Activated CD4-positive, alpha-beta T cell treated with anti-CD3 and anti-CD28 coated beads, Interleukin-2, amount 10 ng/mL, durations not matched to agents 24 days and 14 days (primary cell): ENCODE measurements at regions of chr12 and their contacts with region 1.

Region 1: DNA sequence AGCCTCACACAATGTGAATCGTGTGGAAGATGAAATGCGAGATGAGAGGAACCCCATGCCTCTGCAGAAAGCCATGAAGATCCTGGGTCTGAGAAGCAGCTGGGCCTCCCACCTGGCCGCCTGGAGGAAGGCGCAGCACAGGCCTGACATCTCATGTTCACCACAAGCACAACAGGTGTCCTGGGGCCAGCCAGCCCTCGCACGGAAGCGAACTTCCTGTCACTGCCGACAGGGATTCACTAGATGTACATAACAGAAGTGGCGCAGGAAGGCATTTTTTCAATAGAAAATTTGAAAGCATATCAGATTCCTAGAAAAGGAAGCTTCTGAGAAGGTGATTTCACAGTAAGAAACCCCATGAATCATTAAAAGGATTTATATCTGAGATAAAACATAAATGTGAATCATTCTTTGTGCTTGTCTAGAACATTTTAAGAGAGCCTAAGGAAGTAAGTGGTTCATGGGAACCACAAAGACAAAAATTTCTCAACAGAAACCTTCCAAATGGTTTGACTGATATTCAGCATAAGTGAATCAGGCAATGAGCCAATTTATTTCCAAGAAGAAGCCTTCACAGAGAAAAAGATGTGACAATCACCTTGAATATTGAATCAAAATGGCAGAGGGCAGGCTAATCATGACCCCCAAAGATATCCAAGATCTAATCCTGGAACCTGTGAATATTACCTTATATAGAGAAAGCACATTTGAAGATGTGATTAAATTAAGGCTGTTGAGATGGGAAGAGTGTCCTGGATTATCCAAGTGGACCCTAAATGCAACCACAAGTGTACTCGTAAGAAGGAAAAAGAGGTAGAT is 311.9 kb downstream of the DUSP6 start:
- DNase-seq: peak; percentile 94
- H3K4me3 Mint-ChIP-seq: peak overlapping the region; percentile 72
- H3K27ac Mint-ChIP-seq: peak overlapping the region; percentile 93
- H3K4me1 Mint-ChIP-seq: peaks cover 58% of the 10 kb centered on the region
- H3K27me3 Mint-ChIP-seq: no peaks in the 10 kb centered on the region

Region 2: DNA sequence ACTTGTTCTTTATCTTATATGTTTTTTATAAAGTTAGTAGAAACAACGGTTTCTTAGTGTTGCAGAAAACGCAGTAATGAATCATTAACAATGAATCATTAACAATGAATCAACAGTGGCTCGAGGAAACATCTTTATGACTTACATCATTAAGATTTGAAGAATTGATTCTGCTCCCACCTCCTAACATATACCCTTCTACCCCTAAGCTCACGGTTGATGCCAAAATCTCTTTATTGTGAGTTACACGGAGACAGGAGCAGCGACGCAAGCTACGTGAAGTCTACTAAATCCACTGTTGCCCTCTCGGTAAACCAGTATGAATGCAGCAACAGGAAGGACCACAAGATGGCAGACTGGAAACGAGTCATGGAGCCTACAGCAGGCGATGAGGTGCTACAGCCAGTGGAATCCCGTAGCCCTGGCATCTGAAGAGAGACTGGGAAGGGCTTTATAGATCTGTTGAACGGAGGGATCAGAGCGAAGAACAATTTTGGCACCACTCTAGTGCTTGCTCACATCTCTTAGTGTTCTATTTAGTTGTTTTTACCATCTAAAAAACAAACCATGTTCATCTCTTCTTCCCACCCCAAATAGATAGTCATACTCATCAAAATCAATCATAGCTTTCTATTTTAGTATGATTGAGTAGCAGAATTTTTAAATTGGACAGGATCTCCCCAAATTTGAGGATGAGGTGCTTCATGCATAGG is 20.8 kb before region 1 on chr12:
- intact Hi-C with region 1: loop called (anchors 1 kb)
- DNase-seq: peak; percentile 94
- H3K4me3 Mint-ChIP-seq: no peak overlapping the region
- H3K27ac Mint-ChIP-seq: no peak overlapping the region
- H3K4me1 Mint-ChIP-seq: peaks cover 18% of the 10 kb centered on the region
- H3K27me3 Mint-ChIP-seq: peaks cover 5% of the 10 kb centered on the region

Region 3: DNA sequence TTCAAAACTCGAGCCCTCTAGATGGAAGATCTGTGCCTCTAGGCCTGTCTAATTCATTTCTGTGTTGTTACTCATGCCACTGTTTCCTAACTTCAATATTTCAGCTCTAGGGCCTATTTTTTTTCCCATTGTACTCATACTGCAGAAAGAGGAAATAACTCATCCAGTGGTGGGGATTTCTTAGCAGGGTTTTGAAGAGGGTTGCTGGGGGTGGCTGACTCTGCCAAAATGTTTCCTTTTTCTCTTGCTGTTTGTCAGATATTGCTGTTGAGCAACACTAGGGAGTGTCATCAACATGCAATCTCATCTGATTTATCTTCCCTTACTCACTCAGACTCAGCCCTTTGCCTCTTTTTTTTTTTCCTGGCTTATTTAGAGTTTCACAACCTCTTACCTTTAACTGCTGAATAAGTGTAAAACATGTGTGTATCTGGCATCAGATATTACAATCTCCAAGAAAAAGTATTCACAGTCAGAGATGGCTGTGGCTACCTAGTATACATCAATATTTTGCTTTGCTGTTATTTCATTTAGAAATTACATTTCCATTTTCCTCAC is 122.4 kb after region 1 on chr12:
- intact Hi-C with region 1: loop called (anchors 1 kb)
- DNase-seq: peak; percentile 86
- H3K4me3 Mint-ChIP-seq: no peak overlapping the region
- H3K27ac Mint-ChIP-seq: no peak overlapping the region
- H3K4me1 Mint-ChIP-seq: peaks cover 17% of the 10 kb centered on the region
- H3K27me3 Mint-ChIP-seq: no peaks in the 10 kb centered on the region

Region 4: GRCh38 chr12:89244536-89244935 is 204.2 kb after region 1 on chr12:
- intact Hi-C with region 1: loop called (anchors 1 kb)
- DNase-seq: peak; percentile 82
- H3K4me3 Mint-ChIP-seq: peak overlapping the region; percentile 52
- H3K27ac Mint-ChIP-seq: peak overlapping the region; percentile 84
- H3K4me1 Mint-ChIP-seq: peaks cover 45% of the 10 kb centered on the region
- H3K27me3 Mint-ChIP-seq: no peaks in the 10 kb centered on the region

Region 5: GRCh38 chr12:89470741-89471509 is 430.6 kb after region 1 on chr12:
- intact Hi-C with region 1: loop called (anchors 1 kb)
- DNase-seq: peak; percentile 73
- H3K4me3 Mint-ChIP-seq: no peak overlapping the region
- H3K27ac Mint-ChIP-seq: peak overlapping the region; percentile 22
- H3K4me1 Mint-ChIP-seq: peaks cover 60% of the 10 kb centered on the region
- H3K27me3 Mint-ChIP-seq: no peaks in the 10 kb centered on the region

Region 6: DNA sequence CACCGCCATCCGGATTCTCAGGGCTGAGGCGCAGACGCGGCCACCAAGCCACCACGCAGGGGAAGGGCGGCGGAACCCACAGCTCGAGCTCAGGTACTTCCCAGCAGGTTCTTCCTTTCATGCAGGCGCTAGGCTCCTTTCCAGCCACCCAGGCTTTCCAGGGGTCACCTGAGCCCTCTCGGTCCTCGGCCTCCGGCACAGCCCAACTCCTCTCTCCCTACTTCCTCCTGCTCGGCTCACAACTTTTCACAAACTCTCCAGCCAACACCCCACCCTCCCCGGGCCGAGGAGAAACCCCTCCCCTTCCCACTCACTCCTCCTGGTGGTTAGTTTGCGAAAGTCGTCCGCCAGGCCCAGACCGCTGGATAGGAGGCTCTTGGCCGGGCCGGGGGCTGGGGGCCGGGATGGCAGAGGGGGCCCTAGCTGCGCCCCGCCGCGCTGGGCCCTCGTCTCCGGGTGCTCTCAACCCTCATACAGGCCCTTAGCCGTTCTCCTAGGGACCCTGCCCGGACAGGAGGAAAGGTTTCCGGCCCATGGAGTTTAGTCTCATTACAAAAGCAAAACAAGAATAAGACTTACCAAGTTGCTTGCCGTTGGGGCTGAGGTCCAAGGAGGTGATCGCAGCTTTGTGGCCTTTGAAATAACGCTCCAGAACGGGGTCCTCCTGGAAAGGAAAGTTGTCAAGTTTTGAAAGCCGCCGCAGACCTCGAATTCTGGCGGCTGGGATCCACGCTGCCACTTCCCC is 484.4 kb after region 1 on chr12 and contains the start of gene GALNT4:
- intact Hi-C with region 1: loop called (anchors 1 kb)
- DNase-seq: peak; percentile 94
- H3K4me3 Mint-ChIP-seq: peak within 1 kb of the TSS; percentile 98
- H3K27ac Mint-ChIP-seq: peak within 1 kb of the TSS; percentile 99
- H3K4me1 Mint-ChIP-seq: peaks cover 49% of the 10 kb centered on the region
- H3K27me3 Mint-ChIP-seq: no peaks in the 10 kb centered on the region
- total RNA-seq, gene GALNT4: 6.9 and 7.6 TPM in 2 replicates

Region 7: GRCh38 chr12:89856431-89856830 is 816.1 kb after region 1 on chr12:
- intact Hi-C with region 1: loop called (anchors 1 kb)
- DNase-seq: peak; percentile 62
- H3K4me3 Mint-ChIP-seq: peak overlapping the region; percentile 3
- H3K27ac Mint-ChIP-seq: peak overlapping the region; percentile 56
- H3K4me1 Mint-ChIP-seq: peaks cover 42% of the 10 kb centered on the region
- H3K27me3 Mint-ChIP-seq: peaks cover 2% of the 10 kb centered on the region